ENCODE measurements at regions of chr11 and their contacts with region 1.

Region 1: GRCh38 chr11:78497293-78497692 is 77.4 kb downstream of the NARS2 start:
- DNase-seq: no peak
- H3K4me3 ChIP-seq: no peak overlapping the region
- H3K4me3 Mint-ChIP-seq: no peak overlapping the region
- H3K27ac Mint-ChIP-seq: no peak overlapping the region
- H3K4me1 ChIP-seq: no peaks in the 10 kb centered on the region
- H3K4me1 Mint-ChIP-seq: no peaks in the 10 kb centered on the region
- H3K27me3 ChIP-seq: no peaks in the 10 kb centered on the region
- H3K27me3 Mint-ChIP-seq: no peaks in the 10 kb centered on the region
- CTCF ChIP-seq: no peak

Region 2: GRCh38 chr11:78426845-78427244 is 70.4 kb before region 1 on chr11:
- CTCF ChIA-PET with region 1: no interaction called
- POLR2A ChIA-PET with region 1: interaction called, 15 read pairs
- intact Hi-C with region 1: no loop called
- DNase-seq: no peak
- H3K4me3 ChIP-seq: no peak overlapping the region
- H3K4me3 Mint-ChIP-seq: no peak overlapping the region
- H3K27ac Mint-ChIP-seq: no peak overlapping the region
- H3K4me1 ChIP-seq: peaks cover 9% of the 10 kb centered on the region
- H3K4me1 Mint-ChIP-seq: peaks cover 28% of the 10 kb centered on the region
- H3K27me3 ChIP-seq: no peaks in the 10 kb centered on the region
- H3K27me3 Mint-ChIP-seq: no peaks in the 10 kb centered on the region
- CTCF ChIP-seq: no peak

Region 3: GRCh38 chr11:78564490-78565467 is 67.5 kb after region 1 on chr11:
- CTCF ChIA-PET with region 1: no interaction called
- POLR2A ChIA-PET with region 1: no interaction called
- intact Hi-C with region 1: no loop called
- DNase-seq: peak in 1 of 2 experiments; percentile 80
- H3K4me3 ChIP-seq: no peak overlapping the region
- H3K4me3 Mint-ChIP-seq: no peak overlapping the region
- H3K27ac Mint-ChIP-seq: no peak overlapping the region
- H3K4me1 ChIP-seq: peaks cover 41% of the 10 kb centered on the region
- H3K4me1 Mint-ChIP-seq: peaks cover 20% of the 10 kb centered on the region
- H3K27me3 ChIP-seq: no peaks in the 10 kb centered on the region
- H3K27me3 Mint-ChIP-seq: no peaks in the 10 kb centered on the region
- CTCF ChIP-seq: peak; percentile 81 to 93